ENCODE measurements at regions of chr12 and their contacts with region 1.

Region 1: GRCh38 chr12:40107098-40107802 is 1.4 kb upstream of the SLC2A13 start:
- DNase-seq: peak; percentile 81 to 91 (median 88)
- H3K4me3 ChIP-seq: peak overlapping the region in 5 of 7 experiments; percentile 3 to 72 (median 43)
- H3K27ac ChIP-seq: no peak overlapping the region
- H3K4me1 ChIP-seq: peaks cover 0 to 17% (median 15%) of the 10 kb centered on the region in 4 experiments
- H3K27me3 ChIP-seq: peaks cover 0 to 6% (median 3%) of the 10 kb centered on the region in 5 experiments

Region 2: DNA sequence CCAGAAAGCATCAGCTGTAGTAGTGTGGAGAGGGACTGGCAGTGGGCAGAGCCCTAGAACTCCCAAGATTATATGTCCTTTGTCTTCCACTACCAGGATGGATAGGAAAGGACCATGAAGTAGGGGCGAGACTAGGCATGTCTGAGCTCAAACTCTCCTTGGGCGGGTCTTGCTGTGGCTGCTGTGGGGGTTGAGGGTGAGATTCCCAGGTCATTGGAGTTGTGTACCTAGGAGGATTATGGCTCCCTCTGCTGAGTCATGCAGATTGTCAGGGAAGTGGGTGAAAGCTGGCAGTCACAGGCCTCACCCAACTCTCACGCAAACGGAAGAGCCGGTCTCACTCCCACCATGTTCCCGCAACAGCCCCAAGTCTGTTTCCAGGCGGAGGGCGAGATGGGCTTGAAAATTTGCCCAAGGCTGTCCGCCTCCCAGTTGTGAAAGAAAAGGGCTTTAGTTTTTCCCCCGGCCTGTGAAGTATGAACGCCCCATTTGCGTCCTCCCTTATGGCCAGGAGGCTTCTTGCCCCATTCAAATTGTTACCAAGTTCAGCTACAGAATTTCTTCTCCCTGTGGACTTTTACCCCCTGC is 160.8 kb before region 1 on chr12:
- CTCF ChIA-PET with region 1: no interaction called
- POLR2A ChIA-PET with region 1: no interaction called
- DNase-seq: no peak
- H3K4me3 ChIP-seq: no peak overlapping the region
- H3K27ac ChIP-seq: no peak overlapping the region
- H3K4me1 ChIP-seq: no peaks in the 10 kb centered on the region
- H3K27me3 ChIP-seq: no peaks in the 10 kb centered on the region

Region 3: GRCh38 chr12:40117818-40118217 is 10.6 kb after region 1 on chr12:
- CTCF ChIA-PET with region 1: interaction called, 11 read pairs
- POLR2A ChIA-PET with region 1: no interaction called
- DNase-seq: no peak
- H3K4me3 ChIP-seq: no peak overlapping the region
- H3K27ac ChIP-seq: no peak overlapping the region
- H3K4me1 ChIP-seq: no peaks in the 10 kb centered on the region
- H3K27me3 ChIP-seq: no peaks in the 10 kb centered on the region

Measured in common myeloid progenitor, CD34-positive (primary cell).